ENCODE measurements at regions of chr11 and their contacts with region 1.

Region 1: DNA sequence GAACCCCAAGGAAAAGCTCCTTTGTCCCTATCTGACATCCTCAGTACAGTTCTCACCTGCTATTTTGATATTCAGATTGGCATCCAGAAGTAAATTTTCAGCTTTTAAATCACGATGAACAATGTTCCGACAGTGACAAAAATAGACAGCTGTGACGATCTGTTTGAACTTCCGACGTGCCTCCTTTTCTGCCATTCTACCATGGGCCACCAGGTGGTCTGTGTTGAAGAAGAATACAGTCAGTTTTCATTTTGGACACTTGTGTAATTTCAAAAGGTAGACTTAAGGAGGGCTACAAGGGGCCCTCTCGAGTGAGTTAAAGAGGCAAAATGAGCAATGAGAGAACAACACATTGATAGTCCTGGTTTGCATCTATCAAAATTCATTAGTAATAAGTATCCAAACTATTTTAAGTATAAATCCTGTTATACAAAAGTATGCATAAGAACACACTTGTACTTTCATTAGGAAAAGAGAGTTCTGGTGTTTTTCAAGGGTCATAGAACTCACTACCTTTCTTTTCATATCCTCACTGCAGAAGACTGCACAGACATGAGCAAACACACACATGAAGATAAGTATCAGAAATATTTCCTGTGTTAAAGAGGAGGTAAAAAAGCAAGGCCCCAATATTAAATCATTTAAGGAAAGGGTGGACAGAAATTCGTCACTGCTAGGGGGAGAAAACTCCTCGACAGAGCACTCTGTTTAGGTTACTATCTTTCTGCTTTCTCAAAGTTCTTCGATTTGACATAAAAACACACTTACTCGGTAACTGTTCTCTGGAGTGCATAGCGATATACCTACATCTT is 89.9 kb upstream of the APOA1 start:
- DNase-seq: peak; percentile 62 to 82 (median 78)
- H3K4me3 ChIP-seq: peak overlapping the region in 3 of 7 experiments; percentile 1 to 42 (median 41)
- H3K27ac ChIP-seq: peak overlapping the region; percentile 10 to 97
- H3K4me1 ChIP-seq: peaks cover 51 to 69% (median 62%) of the 10 kb centered on the region in 4 experiments
- H3K27me3 ChIP-seq: no peaks in the 10 kb centered on the region

Region 2: GRCh38 chr11:116397602-116398084 is 529.7 kb before region 1 on chr11:
- CTCF ChIA-PET with region 1: no interaction called
- POLR2A ChIA-PET with region 1: no interaction called
- DNase-seq: no peak
- H3K4me3 ChIP-seq: no peak overlapping the region
- H3K27ac ChIP-seq: no peak overlapping the region
- H3K4me1 ChIP-seq: no peaks in the 10 kb centered on the region
- H3K27me3 ChIP-seq: peaks cover 0 to 2% (median 0%) of the 10 kb centered on the region in 5 experiments

Region 3: DNA sequence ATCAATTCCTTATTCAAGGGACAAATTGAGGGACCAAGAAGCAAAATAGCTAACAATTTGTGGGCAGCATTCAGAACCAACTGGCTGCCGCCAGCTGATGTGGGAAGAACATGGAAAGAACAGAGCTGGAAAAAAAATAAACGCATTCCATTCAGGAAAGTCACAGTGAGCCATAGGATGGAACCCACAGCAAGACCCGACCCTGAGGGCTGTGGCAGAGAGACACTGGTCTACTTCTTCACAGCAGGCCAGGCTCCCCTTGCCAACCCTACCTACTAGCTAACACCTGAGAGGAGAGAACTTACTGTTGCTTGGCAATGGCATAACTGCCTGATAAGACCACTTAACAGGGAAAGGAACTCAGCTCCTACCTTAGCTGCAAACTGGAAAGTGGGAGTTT is 33.6 kb after region 1 on chr11:
- CTCF ChIA-PET with region 1: interaction called, 12 read pairs
- POLR2A ChIA-PET with region 1: no interaction called
- DNase-seq: no peak
- H3K4me3 ChIP-seq: no peak overlapping the region
- H3K27ac ChIP-seq: no peak overlapping the region
- H3K4me1 ChIP-seq: peaks cover 0 to 17% (median 3%) of the 10 kb centered on the region in 4 experiments
- H3K27me3 ChIP-seq: no peaks in the 10 kb centered on the region

Measured in common myeloid progenitor, CD34-positive (primary cell).